ENCODE measurements at regions of chr19 and their contacts with region 1.

Region 1: GRCh38 chr19:55385740-55386529 is at the start of gene RPL28:
- DNase-seq: peak; percentile 100
- H3K4me3 Mint-ChIP-seq: peak within 1 kb of the TSS; percentile 97
- H3K27ac Mint-ChIP-seq: peak within 1 kb of the TSS; percentile 98
- H3K4me1 Mint-ChIP-seq: peaks cover 52% of the 10 kb centered on the region
- H3K27me3 Mint-ChIP-seq: no peaks in the 10 kb centered on the region
- total RNA-seq, gene RPL28: 1,992 and 2,022 TPM in 2 replicates

Region 2: GRCh38 chr19:55279770-55280643 is 105.9 kb before region 1 on chr19 and contains the start of gene HSPBP1:
- intact Hi-C with region 1: loop called (anchors 1 kb)
- DNase-seq: peak; percentile 98
- H3K4me3 Mint-ChIP-seq: peak within 1 kb of the TSS; percentile 100
- H3K27ac Mint-ChIP-seq: peak within 1 kb of the TSS; percentile 99
- H3K4me1 Mint-ChIP-seq: peaks cover 31% of the 10 kb centered on the region
- H3K27me3 Mint-ChIP-seq: peaks cover 4% of the 10 kb centered on the region
- total RNA-seq, gene HSPBP1: 63.9 and 68.3 TPM in 2 replicates

Region 3: DNA sequence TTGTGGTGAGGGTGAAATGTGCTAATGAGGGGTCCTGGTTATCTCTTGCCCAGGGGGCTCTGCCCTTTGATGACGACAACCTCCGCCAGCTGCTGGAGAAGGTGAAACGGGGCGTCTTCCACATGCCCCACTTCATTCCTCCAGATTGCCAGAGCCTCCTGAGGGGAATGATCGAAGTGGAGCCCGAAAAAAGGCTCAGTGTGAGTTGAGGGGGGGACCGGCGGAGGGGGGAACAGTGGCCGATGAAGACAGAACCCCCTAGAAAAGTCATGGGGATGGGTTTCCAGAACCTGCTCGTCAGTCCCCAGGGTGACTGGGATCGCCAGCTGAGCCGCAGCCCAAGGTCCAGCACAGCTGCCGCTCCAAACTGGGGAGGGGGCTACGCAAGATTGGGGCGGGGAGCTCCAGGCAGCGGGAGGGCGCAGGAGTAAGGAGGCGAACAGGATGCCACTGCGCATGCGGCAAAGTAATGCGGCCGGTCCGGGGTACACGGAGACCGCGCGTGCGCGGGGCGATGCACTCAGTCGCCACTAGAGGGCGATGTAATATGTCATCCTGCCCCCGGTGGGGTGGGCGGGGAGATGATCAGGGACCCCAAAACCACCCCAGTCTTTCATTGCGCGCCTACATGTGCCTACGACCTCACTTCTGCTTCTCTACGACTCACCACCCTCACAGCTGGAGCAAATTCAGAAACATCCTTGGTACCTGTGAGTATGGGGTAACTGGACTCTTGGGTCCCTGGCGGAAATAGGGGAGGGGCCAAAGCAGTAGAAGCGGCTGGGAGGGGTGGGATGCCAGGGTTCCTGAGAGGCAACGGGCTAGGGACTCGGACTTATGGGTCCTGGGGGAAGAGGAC is 84.2 kb before region 1 on chr19:
- intact Hi-C with region 1: loop called (anchors 2 kb)
- DNase-seq: peak; percentile 99
- H3K4me3 Mint-ChIP-seq: peak overlapping the region; percentile 95
- H3K27ac Mint-ChIP-seq: peak overlapping the region; percentile 95
- H3K4me1 Mint-ChIP-seq: peaks cover 16% of the 10 kb centered on the region
- H3K27me3 Mint-ChIP-seq: no peaks in the 10 kb centered on the region

Region 4: DNA sequence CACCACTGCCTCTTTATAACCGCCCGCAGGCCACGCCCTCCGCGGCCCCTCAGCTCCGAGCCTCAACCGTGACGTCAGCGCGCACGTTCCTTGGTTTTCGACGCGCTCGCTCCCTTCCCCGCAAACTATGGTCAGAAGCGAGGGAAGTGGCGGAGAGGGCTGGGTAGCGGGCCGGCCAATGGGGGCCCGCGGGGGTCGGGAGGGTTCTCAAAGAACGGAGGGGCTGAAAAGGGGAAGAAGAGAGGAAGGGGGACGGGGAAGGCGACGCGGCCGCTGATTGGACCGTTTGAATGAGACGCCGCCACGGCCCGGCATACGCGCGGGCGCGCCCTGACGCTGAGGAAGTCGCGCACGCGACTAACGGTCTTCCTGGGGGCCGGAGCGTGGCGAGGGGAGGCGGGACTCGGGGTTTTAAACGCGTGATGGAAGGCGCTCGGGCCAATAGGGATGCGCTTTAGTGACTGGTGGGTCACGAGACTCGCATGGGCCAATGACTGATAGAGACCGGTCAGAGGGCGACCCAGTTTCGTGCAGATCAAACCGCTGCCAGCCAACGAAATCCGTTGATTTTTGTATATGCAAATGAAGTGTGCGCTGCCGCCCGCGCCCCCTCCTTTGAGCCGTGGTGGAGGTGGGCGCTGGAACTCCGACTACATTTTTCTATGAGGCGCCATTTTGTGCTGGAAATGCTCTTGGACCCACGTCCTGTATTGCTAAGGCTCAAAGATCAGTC is 22.0 kb after region 1 on chr19:
- intact Hi-C with region 1: loop called (anchors 1 kb)
- DNase-seq: peak; percentile 99
- H3K4me3 Mint-ChIP-seq: peak overlapping the region; percentile 89
- H3K27ac Mint-ChIP-seq: peak overlapping the region; percentile 98
- H3K4me1 Mint-ChIP-seq: peaks cover 34% of the 10 kb centered on the region
- H3K27me3 Mint-ChIP-seq: peaks cover 7% of the 10 kb centered on the region

Region 5: DNA sequence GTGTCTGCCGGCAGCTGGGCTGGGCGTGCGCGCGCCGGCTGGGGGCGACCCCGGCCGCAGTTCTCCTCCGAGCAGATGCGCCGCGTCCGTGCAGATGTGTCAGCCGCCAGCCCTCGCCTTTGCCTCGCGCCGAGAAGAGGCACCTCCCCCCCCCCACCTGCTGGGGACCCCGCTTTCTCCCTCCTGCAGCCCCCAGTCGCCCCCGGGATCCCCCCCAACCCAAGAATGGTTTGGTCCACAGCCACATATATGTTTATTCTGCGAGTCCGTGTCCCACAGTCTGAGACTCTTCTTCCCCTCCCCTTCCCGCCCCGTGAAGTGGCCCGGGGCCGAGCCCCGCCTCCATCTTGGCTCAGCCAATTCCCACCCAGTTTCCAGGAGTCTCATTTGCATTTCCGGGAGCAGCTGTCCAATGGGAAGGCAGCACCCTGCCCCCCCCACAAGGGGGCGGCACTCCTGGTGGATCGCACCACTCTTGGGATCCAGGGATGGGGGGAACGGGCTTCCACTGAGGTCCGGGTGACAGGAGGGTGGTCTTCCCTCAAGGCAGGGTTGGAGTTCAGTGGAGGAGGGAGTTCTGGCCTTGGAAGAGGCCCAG is 66.9 kb after region 1 on chr19:
- intact Hi-C with region 1: no loop called
- DNase-seq: peak; percentile 84
- H3K4me3 Mint-ChIP-seq: no peak overlapping the region
- H3K27ac Mint-ChIP-seq: no peak overlapping the region
- H3K4me1 Mint-ChIP-seq: peaks cover 5% of the 10 kb centered on the region
- H3K27me3 Mint-ChIP-seq: peaks cover 30% of the 10 kb centered on the region

Region 6: DNA sequence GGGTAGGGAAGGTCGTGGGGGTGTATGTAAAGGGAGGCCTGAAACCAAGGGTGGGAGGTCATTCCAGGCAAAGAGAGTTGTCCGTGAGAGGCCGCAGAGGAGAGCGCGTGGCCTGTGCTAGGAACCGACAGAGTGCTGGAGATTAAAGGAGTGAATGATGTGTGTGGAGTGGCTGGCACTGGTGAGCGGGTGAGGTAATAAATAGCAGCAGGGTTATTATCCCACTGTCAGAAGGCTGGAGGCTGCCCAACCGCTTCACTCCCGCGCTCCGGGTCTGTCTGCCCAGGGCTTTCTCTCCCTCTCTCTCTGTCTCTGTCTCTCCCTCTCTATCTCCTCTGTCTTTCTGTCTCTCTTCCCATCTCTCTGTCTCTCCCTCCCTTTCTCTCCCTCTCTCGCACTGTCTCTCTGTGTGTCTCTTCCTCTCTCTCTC is 177.3 kb after region 1 on chr19:
- intact Hi-C with region 1: no loop called
- DNase-seq: no peak
- H3K4me3 Mint-ChIP-seq: no peak overlapping the region
- H3K27ac Mint-ChIP-seq: no peak overlapping the region
- H3K4me1 Mint-ChIP-seq: no peaks in the 10 kb centered on the region
- H3K27me3 Mint-ChIP-seq: no peaks in the 10 kb centered on the region

Region 7: DNA sequence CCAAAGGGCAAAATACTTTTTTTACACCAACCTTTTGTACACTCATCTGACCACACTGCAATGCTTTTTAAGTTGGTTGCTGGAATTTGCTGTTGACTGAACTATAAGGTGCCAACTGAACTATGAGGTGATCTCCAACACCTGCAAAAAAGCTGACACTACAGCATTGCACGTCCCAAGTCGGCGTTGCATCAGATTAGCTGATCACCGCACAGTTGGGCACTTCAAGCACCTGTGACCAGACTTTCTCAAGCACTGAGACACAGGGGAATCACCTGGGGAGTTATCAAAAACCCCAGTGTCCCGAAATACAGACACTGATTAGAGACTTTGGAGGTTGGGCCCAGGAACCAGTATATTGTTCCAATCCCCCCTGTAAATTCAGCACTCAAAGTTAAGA is 444.7 kb after region 1 on chr19:
- intact Hi-C with region 1: no loop called
- DNase-seq: no peak
- H3K4me3 Mint-ChIP-seq: no peak overlapping the region
- H3K27ac Mint-ChIP-seq: no peak overlapping the region
- H3K4me1 Mint-ChIP-seq: no peaks in the 10 kb centered on the region
- H3K27me3 Mint-ChIP-seq: no peaks in the 10 kb centered on the region